Left cardiac atrium (tissue), 4 donors: ENCODE measurements at regions of chr7 and their contacts with region 1.

Region 1: DNA sequence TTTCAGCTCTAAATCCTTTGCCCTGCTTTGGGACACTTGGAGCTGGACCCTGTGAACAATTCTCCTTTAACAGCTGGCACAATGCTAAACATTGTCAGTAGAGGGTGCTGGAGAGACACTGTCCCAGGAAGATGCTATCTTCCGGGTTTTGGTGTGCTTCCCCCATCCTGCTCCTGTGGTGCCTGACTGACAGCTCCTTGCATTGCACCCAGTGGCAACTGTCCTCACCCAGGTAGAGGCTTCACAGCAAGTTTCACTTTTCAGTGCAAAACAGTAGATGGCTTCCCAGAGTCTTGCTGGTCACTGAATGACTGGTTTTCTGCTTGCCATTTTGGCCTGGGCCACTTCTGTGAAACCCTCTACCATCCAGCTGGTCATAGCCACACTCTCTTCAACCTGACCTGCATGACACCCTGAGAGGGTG is 77.3 kb downstream of the CDC14C start:
- DNase-seq: no peak
- ATAC-seq: peak; percentile 45 to 61

Region 2: GRCh38 chr7:49187543-49188268 is 186.1 kb after region 1 on chr7:
- intact Hi-C with region 1: no loop called
- DNase-seq: no peak
- ATAC-seq: no peak

Region 3: DNA sequence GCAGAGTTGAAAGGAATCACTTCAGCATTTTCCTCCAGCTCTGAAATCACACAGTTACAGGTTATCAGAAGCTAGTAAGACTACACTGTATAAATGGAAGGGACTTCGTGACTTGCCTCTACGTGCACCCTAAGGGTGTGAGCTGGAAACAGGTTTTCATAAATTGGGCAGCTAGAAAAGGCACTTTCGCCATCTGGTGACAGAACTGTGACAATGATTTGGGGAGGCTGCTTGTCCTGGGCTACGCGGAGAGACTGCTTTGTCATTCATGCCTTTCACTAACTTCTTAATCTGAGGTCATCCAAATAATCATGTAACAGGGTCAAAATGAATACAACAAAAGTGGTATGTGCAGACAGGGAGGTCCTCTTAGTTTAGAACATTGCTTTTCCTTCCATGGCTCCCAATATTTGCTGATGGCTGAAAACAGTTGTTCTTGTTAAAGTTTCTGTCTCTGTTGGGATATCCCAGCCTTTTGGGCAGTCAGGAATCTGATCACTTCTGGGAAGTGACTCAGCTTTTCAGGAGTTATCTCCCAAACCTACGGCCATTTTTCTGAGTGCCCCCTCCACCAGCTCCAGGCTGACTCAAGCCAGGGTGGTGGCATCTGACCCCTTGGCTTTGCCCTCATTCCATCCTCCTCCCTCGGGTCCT is 789.6 kb after region 1 on chr7:
- intact Hi-C with region 1: loop called in 1 of 2 experiments (anchors 2 kb)
- DNase-seq: no peak
- ATAC-seq: peak; percentile 65 to 77

Region 4: DNA sequence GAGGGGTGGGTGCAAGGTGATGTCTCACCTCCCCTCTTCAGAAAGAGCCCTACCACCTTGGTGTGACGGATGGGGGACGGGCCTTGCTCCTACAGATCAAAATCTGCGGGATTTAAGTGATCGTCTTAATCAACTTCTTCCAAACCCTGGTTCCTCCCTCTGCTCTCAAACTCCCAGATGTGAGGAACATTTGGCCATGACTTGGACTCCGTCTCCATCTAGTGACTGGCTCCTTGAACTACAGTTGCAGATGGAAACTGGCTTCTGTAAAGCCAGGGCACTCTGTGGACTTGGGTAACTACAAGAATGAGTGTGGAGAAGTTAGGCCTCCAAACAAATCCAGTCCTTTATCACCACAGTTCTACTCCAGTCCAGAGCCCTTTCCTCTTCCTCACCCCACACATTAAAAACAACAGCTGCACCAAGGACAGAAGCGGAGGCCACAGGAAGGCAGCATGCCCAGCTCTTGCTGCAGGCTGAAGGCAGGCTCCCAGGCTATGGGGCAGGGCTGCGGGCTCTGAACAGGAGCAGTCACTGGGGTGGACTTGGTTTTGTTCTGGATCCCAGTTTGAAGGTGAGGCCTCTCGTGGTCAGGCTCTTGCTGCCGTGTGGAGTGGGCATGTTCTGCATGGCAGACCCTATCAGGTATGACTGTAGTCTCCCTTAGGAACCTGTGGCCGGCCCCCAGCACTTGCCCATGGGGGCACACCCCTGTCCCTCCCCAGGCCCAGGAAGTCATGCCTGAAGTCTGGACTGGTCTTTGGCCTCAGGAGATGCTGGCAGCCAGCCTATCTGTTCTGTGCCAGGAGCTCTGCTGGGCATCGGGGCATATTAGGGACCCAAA is 851.2 kb after region 1 on chr7:
- intact Hi-C with region 1: loop called in 1 of 2 experiments (anchors 5 kb)
- DNase-seq: peak; percentile 33
- ATAC-seq: peak; percentile 77 to 80